ENCODE measurements at regions of chr19 and their contacts with region 1.

Region 1: DNA sequence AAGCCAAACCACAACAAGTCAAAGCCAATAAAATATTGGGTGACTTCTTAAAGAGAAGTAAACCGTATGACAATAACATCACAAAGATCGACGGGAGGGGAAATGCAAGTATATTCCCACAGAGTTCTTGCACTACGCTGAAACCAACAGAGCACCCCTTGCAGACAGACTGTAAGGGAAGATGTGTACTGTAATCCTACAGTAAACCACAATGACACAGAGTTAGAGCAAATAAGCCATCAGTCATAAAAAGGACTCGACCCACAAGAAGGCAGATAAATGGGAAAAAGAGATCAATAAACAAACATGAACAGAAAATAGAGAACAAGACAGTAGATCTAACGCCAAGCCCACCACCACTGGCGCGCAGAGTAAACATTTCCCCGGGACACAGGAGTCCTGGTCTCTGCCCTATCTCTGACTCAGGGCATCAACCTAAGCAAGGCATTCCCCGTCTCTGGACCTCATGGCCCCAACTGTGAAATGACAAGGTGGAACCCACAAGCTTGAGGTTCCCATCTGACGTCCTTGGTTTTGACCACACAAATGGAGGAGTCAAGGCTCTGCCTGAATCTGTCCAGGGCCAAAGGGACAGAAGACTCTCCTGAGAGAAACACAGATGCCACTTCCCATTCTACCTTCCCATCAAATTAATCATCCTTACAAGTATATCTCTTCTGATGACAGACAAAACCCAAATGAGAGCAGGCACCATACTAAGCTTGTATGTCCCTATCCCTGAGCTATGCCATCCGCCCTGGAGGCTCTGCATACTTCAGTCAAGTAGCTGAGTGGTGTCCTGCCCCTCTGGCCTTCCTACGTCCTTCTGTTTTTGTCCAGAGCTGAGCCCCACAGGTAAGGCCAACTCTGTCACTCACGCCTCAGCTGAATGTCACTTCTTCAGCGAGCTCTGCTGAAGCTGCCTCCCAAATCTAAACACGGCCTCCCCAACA is 15.0 kb downstream of the SAFB2 start:
- DNase-seq: no peak
- H3K4me3 ChIP-seq: no peak overlapping the region
- H3K27ac ChIP-seq: no peak overlapping the region
- H3K4me1 ChIP-seq: no peaks in the 10 kb centered on the region
- H3K27me3 ChIP-seq: no peaks in the 10 kb centered on the region
- CTCF ChIP-seq: no peak

Region 2: GRCh38 chr19:5651361-5651760 is 43.8 kb after region 1 on chr19:
- CTCF ChIA-PET with region 1: interaction called, 18 read pairs
- POLR2A ChIA-PET with region 1: no interaction called
- intact Hi-C with region 1: no loop called
- DNase-seq: no peak
- H3K4me3 ChIP-seq: no peak overlapping the region
- H3K27ac ChIP-seq: no peak overlapping the region
- H3K4me1 ChIP-seq: no peaks in the 10 kb centered on the region
- H3K27me3 ChIP-seq: no peaks in the 10 kb centered on the region
- CTCF ChIP-seq: no peak

Measured in PC-9 (cell line).